ENCODE measurements at regions of chr2 and their contacts with region 1.

Region 1: DNA sequence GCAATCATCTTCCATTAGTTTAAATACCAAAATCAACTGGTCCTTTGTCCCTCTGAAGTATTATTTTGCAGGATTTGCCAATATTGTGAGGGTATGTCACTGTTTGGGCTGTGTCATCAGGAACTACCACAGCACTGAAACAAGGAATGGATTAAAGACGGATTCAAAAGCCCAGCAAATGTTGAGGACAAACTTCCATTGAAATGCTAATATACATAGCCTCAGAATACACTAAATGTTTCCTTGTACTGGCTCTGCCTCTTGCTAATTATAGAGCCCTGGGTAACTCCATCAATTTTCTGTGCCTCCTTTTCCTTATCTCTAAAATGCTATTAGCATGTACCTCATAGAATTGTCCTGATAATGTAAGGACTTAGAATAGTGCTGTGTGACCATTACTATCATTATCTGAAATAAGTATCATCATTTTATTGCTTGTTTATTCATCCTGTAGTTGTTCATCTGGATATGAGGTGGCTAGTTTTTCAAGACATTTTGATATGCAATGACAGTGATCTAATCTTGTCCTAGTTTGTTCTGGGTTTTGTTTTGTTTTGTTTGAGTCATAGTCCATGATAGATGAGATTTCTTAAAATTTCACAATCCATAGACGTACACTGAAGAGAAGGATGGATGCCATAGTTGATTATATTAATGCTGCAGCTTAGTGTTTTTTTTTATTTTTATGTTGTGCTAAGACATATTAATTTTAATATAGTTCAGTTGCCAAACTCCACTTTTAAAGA is 333.4 kb upstream of the KCNH7 start:
- H3K4me3 ChIP-seq: no peak overlapping the region
- H3K27ac ChIP-seq: no peak overlapping the region
- H3K4me1 ChIP-seq: no peaks in the 10 kb centered on the region
- CTCF ChIP-seq: no peak

Region 2: DNA sequence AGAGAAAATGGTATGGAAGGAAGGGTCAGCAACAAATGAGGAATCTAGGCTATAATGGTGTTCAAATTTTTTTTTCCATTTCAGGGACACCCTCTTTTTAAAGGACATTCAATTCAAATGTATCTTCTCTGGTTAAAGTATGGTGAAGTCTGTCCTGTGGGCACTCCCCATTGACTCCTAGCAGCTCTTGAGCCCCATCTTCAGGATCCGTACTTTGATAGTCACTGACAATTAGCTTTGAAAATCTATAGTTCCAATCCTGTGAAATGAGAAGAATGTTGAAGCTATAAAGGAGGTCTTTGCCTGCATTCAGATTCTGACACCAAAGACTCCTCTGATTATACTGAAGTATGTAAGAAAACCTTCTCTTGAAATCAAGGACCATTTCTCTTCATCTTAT is 376.6 kb before region 1 on chr2:
- CTCF ChIA-PET with region 1: no interaction called
- POLR2A ChIA-PET with region 1: no interaction called
- H3K4me3 ChIP-seq: no peak overlapping the region
- H3K27ac ChIP-seq: no peak overlapping the region
- H3K4me1 ChIP-seq: no peaks in the 10 kb centered on the region
- CTCF ChIP-seq: no peak

Region 3: GRCh38 chr2:163155279-163155883 is 16.6 kb before region 1 on chr2:
- CTCF ChIA-PET with region 1: interaction called, 14 read pairs
- POLR2A ChIA-PET with region 1: no interaction called
- H3K4me3 ChIP-seq: no peak overlapping the region
- H3K27ac ChIP-seq: no peak overlapping the region
- H3K4me1 ChIP-seq: no peaks in the 10 kb centered on the region
- CTCF ChIP-seq: 0 out of 2 replicates have a peak, but pooled peaks have one; percentile 24

Region 4: DNA sequence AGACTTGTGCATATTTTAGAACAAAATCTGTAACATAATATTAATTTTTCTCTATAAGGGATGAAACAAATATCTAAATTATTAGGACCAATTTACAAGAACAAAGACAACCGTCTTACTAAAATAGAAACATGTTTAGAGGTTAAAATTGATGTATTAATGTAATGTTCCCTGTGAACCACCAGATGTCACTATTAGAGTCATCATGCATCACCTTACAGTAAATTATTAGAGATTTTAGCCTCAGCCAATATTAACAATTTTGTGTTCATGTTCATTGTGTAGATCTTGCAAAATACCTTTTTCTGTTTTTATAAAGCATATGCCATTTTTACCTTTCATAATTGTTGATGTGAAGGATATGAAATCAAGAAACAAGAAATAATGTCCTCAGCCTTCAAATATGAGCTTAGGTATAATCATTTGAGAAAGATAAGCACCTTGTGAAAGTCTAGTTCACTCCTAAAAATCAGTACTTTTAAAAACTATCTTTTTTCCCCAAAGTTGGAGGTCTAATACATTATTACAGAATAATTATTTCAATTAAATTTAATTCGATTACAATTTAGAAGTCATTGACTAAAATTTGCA is 10.9 kb after region 1 on chr2:
- CTCF ChIA-PET with region 1: interaction called, 49 read pairs
- POLR2A ChIA-PET with region 1: no interaction called
- H3K4me3 ChIP-seq: no peak overlapping the region
- H3K27ac ChIP-seq: no peak overlapping the region
- H3K4me1 ChIP-seq: no peaks in the 10 kb centered on the region
- CTCF ChIP-seq: 0 out of 2 replicates have a peak, but pooled peaks have one; percentile 18